Activated T-helper 1 cell treated with anti-CD3 and anti-CD28 coated beads, Interleukin-12 subunit alpha, Interleukin-12 subunit beta, Interleukin-2, Interleukin-4 antibody, amounts not matched to agents 30 ng/mL and 10 ng/mL and 1 ng/mL, durations not matched to agents 14 hours and 24 hours and 36 hours (primary cell): ENCODE measurements at regions of chr9 and their contacts with region 1.

Region 1: GRCh38 chr9:74245866-74246497 is 251.2 kb upstream of the RORB start:
- DNase-seq: no peak
- H3K4me3 Mint-ChIP-seq: peak overlapping the region; percentile 45
- H3K27ac Mint-ChIP-seq: peak overlapping the region; percentile 86
- H3K4me1 Mint-ChIP-seq: peaks cover 15% of the 10 kb centered on the region
- H3K27me3 Mint-ChIP-seq: no peaks in the 10 kb centered on the region

Region 2: DNA sequence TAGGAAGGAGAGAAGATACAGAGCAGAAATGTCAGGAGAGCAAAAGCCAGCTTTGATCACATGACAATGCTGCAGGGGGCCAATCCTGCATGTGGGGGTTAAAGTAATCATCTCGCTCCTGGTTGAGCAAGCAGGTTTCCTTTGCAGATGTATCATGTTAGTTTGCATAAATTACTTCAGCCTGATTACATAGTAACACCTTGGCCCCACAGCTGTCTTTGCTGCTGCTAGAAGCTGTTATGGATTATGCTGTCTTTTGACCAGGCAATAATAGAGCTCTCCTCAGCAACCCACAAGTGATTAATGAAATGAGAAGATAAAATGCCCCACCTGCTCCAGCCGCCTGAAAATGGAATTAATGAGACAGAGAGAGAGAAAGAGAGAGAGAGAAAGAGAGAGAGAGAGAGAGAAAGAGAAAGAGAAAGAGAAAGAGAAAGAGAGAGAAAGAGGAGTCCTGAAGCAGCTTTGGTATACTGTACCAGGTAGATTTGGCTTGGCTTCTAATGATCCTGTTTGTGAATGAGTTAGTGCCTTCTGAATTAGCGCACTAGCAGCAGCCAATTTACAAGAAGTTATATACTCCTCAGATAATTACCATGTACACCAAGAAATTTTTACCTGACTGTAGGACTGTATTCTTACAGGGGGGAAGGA is 76.8 kb after region 1 on chr9:
- intact Hi-C with region 1: loop called (anchors 10 kb)
- DNase-seq: no peak
- H3K4me3 Mint-ChIP-seq: peak overlapping the region; percentile 77
- H3K27ac Mint-ChIP-seq: peak overlapping the region; percentile 77
- H3K4me1 Mint-ChIP-seq: peaks cover 19% of the 10 kb centered on the region
- H3K27me3 Mint-ChIP-seq: peaks cover 2% of the 10 kb centered on the region

Region 3: GRCh38 chr9:75389101-75389500 is 1143.1 kb after region 1 on chr9:
- intact Hi-C with region 1: no loop called
- DNase-seq: no peak
- H3K4me3 Mint-ChIP-seq: no peak overlapping the region
- H3K27ac Mint-ChIP-seq: no peak overlapping the region
- H3K4me1 Mint-ChIP-seq: no peaks in the 10 kb centered on the region
- H3K27me3 Mint-ChIP-seq: no peaks in the 10 kb centered on the region